ENCODE measurements at regions of chr19 and their contacts with region 1.

Region 1: GRCh38 chr19:39546599-39546998 is 6.6 kb upstream of the EID2 start:
- DNase-seq: no peak
- ATAC-seq: no peak

Region 2: GRCh38 chr19:39154593-39155406 is 391.8 kb before region 1 on chr19:
- intact Hi-C with region 1: no loop called
- DNase-seq: no peak
- ATAC-seq: no peak

Region 3: GRCh38 chr19:39532233-39533002 is 14.2 kb before region 1 on chr19 and contains the start of gene EID2B:
- intact Hi-C with region 1: no loop called
- DNase-seq: peak; percentile 99
- ATAC-seq: peak; percentile 98
- total RNA-seq, gene EID2B: 1.7 TPM

Region 4: DNA sequence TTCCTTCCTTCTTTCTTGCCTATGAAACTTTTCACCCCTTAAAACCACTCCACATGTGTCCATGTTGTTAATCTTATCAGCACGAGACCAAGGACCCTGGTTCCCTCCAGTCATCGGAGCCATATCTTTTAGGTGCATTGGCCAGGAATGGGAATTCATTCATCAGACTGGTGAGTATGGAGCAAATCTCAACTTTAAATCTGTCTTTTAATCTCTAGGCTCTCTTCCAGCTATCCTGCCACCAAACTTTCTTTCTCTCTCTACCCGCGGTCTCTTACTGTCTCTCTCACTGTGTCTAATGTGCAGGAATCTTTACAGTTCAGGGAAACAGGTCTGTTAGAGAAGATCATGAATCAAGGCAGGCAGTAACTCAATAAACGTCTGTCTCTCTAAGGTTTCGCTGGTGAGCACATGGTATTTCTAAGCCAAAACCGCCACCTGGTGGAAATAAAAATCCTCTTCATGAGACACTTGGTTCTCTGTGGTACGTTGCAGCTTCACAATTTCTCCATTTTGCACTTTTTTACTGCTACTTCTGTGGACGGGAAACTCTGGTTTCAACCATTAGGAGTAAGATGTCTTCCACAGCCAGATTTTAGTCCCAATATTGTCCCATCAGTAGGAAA is 125.3 kb after region 1 on chr19:
- intact Hi-C with region 1: loop called (anchors 1 kb)
- DNase-seq: no peak
- ATAC-seq: no peak